CD8-positive, alpha-beta memory T cell (primary cell): ENCODE measurements at regions of chr11 and their contacts with region 1.

Region 1: DNA sequence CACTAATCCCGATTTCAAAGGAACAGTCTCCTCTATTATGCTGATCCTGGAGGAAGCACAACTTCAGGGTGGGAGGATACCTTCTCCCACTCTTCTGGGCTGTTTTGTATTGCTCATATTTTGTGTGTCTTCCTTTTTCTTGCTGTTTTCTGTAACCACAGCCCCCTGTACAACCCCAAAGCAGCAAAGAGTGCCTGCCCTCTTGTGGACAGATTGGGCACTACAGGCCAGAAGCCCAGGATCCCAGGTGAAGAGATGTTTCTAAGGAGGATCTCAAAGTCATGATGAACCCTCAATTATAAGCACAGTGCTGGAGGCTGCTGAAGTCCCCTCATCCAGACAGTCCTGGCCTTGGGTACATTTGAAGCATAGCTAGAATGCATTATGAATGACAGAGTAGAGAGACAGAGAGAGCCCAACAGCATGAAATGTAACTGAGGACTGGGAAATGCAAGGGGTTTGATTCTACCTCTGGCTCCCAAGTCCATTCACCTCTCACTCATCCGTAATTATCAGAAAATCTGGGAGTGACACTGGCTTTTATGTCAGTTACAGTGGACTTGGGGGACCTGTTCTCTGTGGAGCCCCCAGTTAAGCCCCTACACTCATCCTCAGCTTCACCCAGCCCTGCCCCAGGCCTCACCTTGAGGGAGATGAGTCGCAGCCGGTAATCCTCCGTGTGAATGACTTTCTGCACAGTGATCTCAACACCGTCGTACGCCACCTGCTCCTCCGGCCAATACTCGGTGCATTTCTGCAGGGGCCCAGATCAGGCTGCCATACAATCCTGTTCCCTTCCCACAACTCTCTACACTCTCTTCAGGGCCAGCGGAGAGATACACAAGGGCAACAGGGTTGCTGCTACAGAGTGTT is 6.2 kb upstream of the IGSF22 start:
- DNase-seq: peak; percentile 42 to 79 (median 59)
- H3K4me3 ChIP-seq: no peak overlapping the region
- H3K4me3 Mint-ChIP-seq: no peak overlapping the region
- H3K27ac ChIP-seq: no peak overlapping the region
- H3K27ac Mint-ChIP-seq: peak overlapping the region in 2 of 8 donors; percentile 26 to 64
- H3K4me1 ChIP-seq: peaks cover 8% of the 10 kb centered on the region
- H3K4me1 Mint-ChIP-seq: peaks cover 8 to 13% (median 11%) of the 10 kb centered on the region in 3 donors
- H3K27me3 ChIP-seq: no peaks in the 10 kb centered on the region
- H3K27me3 Mint-ChIP-seq: peaks cover 6 to 11% of the 10 kb centered on the region in 2 donors

Region 2: GRCh38 chr11:18540207-18541009 is 191.8 kb before region 1 on chr11:
- CTCF ChIA-PET with region 1: interaction called, 26 read pairs
- POLR2A ChIA-PET with region 1: no interaction called
- DNase-seq: peak in 2 of 5 donors; percentile 31 to 37
- H3K4me3 ChIP-seq: no peak overlapping the region
- H3K4me3 Mint-ChIP-seq: no peak overlapping the region
- H3K27ac ChIP-seq: no peak overlapping the region
- H3K27ac Mint-ChIP-seq: peak overlapping the region in 5 of 8 donors; percentile 11 to 81 (median 66)
- H3K4me1 ChIP-seq: no peaks in the 10 kb centered on the region
- H3K4me1 Mint-ChIP-seq: peaks cover 0 to 6% (median 0%) of the 10 kb centered on the region in 3 donors
- H3K27me3 ChIP-seq: no peaks in the 10 kb centered on the region
- H3K27me3 Mint-ChIP-seq: no peaks in the 10 kb centered on the region

Region 3: DNA sequence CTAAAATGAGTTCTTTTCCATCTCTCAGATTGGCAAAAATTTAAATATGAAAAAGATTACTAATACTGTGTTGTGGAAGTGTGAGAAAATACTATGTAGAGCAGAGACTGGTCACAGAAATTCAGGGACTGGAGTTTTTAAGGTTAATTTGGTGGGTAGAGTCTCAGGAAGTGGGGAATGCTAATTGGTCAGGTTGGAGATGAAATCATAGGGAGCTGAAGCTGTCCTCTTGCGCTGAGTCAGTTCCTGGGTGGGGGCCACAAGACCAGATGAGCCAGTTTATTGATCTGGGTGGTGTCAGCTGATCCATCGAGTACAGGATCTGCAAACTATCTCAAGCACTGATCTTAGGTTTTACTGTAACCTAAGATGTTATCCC is 63.0 kb before region 1 on chr11:
- CTCF ChIA-PET with region 1: interaction called, 12 read pairs
- POLR2A ChIA-PET with region 1: no interaction called
- DNase-seq: no peak
- H3K4me3 ChIP-seq: no peak overlapping the region
- H3K4me3 Mint-ChIP-seq: peak overlapping the region in 5 of 7 donors; percentile 2 to 71 (median 30)
- H3K27ac ChIP-seq: no peak overlapping the region
- H3K27ac Mint-ChIP-seq: peak overlapping the region; percentile 40 to 92 (median 74)
- H3K4me1 ChIP-seq: peaks cover 33% of the 10 kb centered on the region
- H3K4me1 Mint-ChIP-seq: peaks cover 39 to 57% (median 49%) of the 10 kb centered on the region in 3 donors
- H3K27me3 ChIP-seq: no peaks in the 10 kb centered on the region
- H3K27me3 Mint-ChIP-seq: peaks cover 0 to 1% of the 10 kb centered on the region in 2 donors

Region 4: GRCh38 chr11:18713646-18714442 is 18.3 kb before region 1 on chr11:
- CTCF ChIA-PET with region 1: interaction called, 10 read pairs
- POLR2A ChIA-PET with region 1: no interaction called
- DNase-seq: no peak
- H3K4me3 ChIP-seq: no peak overlapping the region
- H3K4me3 Mint-ChIP-seq: no peak overlapping the region
- H3K27ac ChIP-seq: no peak overlapping the region
- H3K27ac Mint-ChIP-seq: peak overlapping the region in 1 of 8 donors; percentile 16
- H3K4me1 ChIP-seq: no peaks in the 10 kb centered on the region
- H3K4me1 Mint-ChIP-seq: no peaks in the 10 kb centered on the region
- H3K27me3 ChIP-seq: no peaks in the 10 kb centered on the region
- H3K27me3 Mint-ChIP-seq: peaks cover 3% of the 10 kb centered on the region in 2 donors